Activated naive CD4-positive, alpha-beta T cell treated with anti-CD3 and anti-CD28 coated beads, Interleukin-2, amount 10 ng/mL, durations not matched to agents 7 days and 5 days (primary cell): ENCODE measurements at regions of chr10 and their contacts with region 1.

Region 1: GRCh38 chr10:97196223-97197029 is 10.7 kb upstream of the SLIT1 start:
- DNase-seq: peak; percentile 79
- H3K4me3 Mint-ChIP-seq: peak overlapping the region; percentile 72
- H3K27ac Mint-ChIP-seq: no peak overlapping the region
- H3K4me1 Mint-ChIP-seq: peaks cover 22% of the 10 kb centered on the region
- H3K27me3 Mint-ChIP-seq: peaks cover 62% of the 10 kb centered on the region

Region 2: DNA sequence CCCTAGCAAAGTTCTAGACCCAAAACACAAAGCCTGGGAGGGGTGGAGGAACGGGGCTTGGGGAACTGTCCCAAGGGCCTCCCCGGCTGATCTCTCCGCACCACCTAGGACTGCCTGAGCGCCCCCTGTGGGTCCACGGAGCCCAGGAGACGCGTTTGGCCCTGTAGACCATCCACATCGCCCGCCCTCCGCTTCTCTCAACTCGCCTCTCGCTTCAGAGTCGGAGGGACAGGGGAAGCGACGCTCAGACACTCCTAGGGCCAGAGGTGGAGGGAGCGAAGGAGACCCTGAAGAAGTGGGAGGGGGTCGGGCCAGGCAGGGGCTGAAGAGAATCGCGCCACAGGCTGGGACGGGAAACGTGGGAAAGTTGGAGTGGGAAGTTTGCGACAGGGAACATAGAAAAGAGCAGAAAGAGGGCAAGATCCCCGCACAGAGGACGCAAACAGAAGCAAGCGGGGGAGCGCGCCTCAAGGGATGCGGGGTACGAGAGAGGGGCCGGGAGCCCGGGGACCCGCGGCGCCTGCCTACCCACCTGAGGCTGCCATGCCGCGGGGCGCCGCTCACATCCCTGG is 476.5 kb before region 1 on chr10:
- CTCF ChIA-PET with region 1: no interaction called
- DNase-seq: peak; percentile 49
- H3K4me3 Mint-ChIP-seq: peak overlapping the region; percentile 78
- H3K27ac Mint-ChIP-seq: no peak overlapping the region
- H3K4me1 Mint-ChIP-seq: peaks cover 18% of the 10 kb centered on the region
- H3K27me3 Mint-ChIP-seq: peaks cover 32% of the 10 kb centered on the region

Region 3: GRCh38 chr10:97072851-97073665 is 123.4 kb before region 1 on chr10:
- CTCF ChIA-PET with region 1: interaction called, 25 read pairs
- DNase-seq: peak; percentile 87
- H3K4me3 Mint-ChIP-seq: no peak overlapping the region
- H3K27ac Mint-ChIP-seq: no peak overlapping the region
- H3K4me1 Mint-ChIP-seq: peaks cover 11% of the 10 kb centered on the region
- H3K27me3 Mint-ChIP-seq: peaks cover 61% of the 10 kb centered on the region

Region 4: GRCh38 chr10:97081621-97082235 is 114.7 kb before region 1 on chr10:
- CTCF ChIA-PET with region 1: interaction called, 14 read pairs
- DNase-seq: peak; percentile 81
- H3K4me3 Mint-ChIP-seq: no peak overlapping the region
- H3K27ac Mint-ChIP-seq: no peak overlapping the region
- H3K4me1 Mint-ChIP-seq: no peaks in the 10 kb centered on the region
- H3K27me3 Mint-ChIP-seq: peaks cover 52% of the 10 kb centered on the region

Region 5: DNA sequence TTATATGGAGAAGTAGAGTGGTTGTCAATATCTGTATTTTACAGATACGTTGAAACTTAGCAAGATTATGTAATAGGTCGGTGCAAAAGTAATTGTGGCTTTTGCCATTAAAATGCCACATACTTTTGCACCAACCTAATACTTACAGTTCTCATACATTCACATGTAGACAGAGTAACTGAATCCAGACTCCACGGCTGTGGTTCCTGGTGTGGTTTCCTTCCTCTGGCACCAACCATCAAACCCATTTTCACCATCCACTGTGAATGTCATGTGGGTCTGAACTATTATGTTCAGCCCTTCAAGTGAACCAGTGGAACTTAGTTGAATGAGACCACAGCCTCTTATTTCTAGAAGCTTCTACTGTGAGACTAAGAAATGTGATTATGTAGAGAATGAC is 20.9 kb after region 1 on chr10:
- CTCF ChIA-PET with region 1: interaction called, 10 read pairs
- DNase-seq: no peak
- H3K4me3 Mint-ChIP-seq: no peak overlapping the region
- H3K27ac Mint-ChIP-seq: peak overlapping the region; percentile 52
- H3K4me1 Mint-ChIP-seq: peaks cover 30% of the 10 kb centered on the region
- H3K27me3 Mint-ChIP-seq: no peaks in the 10 kb centered on the region

Region 6: DNA sequence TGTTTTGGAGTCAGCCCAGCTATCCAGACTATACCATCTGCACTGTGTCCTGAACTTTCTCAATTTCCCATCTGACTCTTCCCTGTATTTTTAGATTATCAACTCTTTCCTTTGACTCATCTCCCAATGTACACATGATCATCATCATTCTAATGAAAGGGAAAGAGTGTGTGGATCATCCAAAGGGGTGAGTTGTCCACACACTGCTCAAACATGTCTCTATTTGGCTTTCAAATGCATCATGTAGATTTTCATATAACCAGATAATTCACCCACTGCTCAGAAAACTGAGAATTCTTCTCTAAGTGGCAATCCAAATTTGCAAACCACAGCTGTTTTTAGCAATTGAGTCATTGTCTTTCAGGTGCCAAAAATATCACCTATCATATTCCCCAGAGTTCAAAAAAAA is 1440.5 kb after region 1 on chr10:
- CTCF ChIA-PET with region 1: no interaction called
- DNase-seq: no peak
- H3K4me3 Mint-ChIP-seq: no peak overlapping the region
- H3K27ac Mint-ChIP-seq: no peak overlapping the region
- H3K4me1 Mint-ChIP-seq: no peaks in the 10 kb centered on the region
- H3K27me3 Mint-ChIP-seq: peaks cover 8% of the 10 kb centered on the region